ENCODE measurements at regions of chr14 and their contacts with region 1.

Region 1: GRCh38 chr14:56561606-56562005 is 18.0 kb upstream of the TMEM260 start:
- DNase-seq: no peak
- H3K4me3 ChIP-seq: no peak overlapping the region
- H3K27ac ChIP-seq: no peak overlapping the region
- H3K4me1 ChIP-seq: no peaks in the 10 kb centered on the region
- H3K27me3 ChIP-seq: peaks cover 0 to 5% of the 10 kb centered on the region in 2 donors
- CTCF ChIP-seq: no peak
- POLR2A ChIP-seq: no peak

Region 2: DNA sequence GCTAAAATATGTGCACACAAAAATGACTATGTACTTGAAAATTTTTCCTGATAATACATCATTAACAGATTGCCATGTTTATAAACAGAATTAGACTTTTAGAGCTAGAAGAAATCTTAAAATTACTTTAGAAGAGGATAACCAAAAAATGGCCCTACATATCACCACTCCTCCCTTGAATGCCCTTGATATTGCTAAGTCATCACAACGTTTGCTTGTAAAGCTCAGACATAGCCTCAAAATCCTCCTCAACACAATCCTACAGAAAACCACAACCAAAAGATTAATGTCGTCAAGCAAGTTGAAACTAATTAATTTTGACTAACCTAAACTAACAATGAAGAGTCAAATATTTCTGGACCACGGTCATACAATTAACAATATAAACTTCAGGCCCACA is 809.4 kb after region 1 on chr14:
- intact Hi-C with region 1: loop called (anchors 5 kb)
- DNase-seq: no peak
- H3K4me3 ChIP-seq: no peak overlapping the region
- H3K27ac ChIP-seq: no peak overlapping the region
- H3K4me1 ChIP-seq: no peaks in the 10 kb centered on the region
- H3K27me3 ChIP-seq: no peaks in the 10 kb centered on the region
- CTCF ChIP-seq: no peak
- POLR2A ChIP-seq: no peak

Measured in breast epithelium (tissue), 4 donors.